ENCODE measurements at regions of chrX and their contacts with region 1.

Region 1: GRCh38 chrX:48957827-48958634 is 624 bp upstream of the OTUD5 start:
- DNase-seq: peak; percentile 87 to 98 (median 93)
- ATAC-seq: peak; percentile 80 to 81
- H3K4me3 Mint-ChIP-seq: peak overlapping the region; percentile 93 to 100 (median 99)
- H3K27ac Mint-ChIP-seq: peak overlapping the region; percentile 96 to 100 (median 100)
- H3K4me1 Mint-ChIP-seq: peaks cover 18 to 56% (median 42%) of the 10 kb centered on the region in 4 donors
- H3K27me3 Mint-ChIP-seq: no peaks in the 10 kb centered on the region

Region 2: GRCh38 chrX:48737213-48737938 is 220.7 kb before region 1 on chrX:
- POLR2A ChIA-PET with region 1: interaction called, 10 read pairs
- DNase-seq: peak; percentile 63 to 96 (median 85)
- ATAC-seq: peak; percentile 95
- H3K4me3 Mint-ChIP-seq: peak overlapping the region; percentile 81 to 95 (median 92)
- H3K27ac Mint-ChIP-seq: peak overlapping the region; percentile 95 to 99 (median 97)
- H3K4me1 Mint-ChIP-seq: peaks cover 11 to 23% (median 22%) of the 10 kb centered on the region in 4 donors
- H3K27me3 Mint-ChIP-seq: no peaks in the 10 kb centered on the region

Region 3: DNA sequence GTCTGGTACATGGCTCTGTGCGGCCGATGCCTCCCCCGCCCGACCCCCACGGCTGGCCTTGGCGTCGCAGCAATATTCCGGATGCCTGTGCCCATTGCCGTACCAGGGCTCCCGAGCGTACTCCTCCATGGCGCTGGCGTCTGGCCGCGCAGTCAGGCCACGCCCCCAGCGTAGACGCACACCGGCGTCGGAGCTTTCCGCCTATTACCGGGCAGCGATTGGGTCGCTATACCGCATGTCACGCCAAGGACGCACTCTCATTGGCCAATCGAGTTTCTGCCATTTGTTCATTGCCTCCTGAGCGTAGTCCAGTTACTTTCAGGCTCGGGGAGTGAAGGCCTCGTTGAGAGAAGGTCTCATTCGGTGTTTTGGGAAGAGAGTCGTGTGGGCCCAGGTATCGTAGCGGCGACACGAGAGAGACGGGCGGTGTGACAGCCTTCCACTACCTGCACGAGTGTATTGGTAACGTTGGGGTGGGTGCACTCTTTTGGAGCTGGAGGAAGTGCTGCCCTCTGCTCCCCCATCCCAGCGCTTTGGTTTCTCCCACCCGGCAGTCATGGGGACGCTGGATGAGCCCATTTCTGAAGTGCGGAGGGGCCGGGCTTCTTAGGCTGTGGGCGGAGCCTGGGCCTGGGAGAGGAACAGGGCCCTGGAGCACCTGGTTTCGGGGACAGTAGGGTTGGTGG is 60.3 kb before region 1 on chrX and contains the starts of genes PQBP1 and TIMM17B:
- POLR2A ChIA-PET with region 1: interaction called, 24 read pairs
- DNase-seq: peak; percentile 79 to 94 (median 87)
- ATAC-seq: peak; percentile 86
- H3K4me3 Mint-ChIP-seq: peak within 1 kb of the TSS; percentile 88 to 98 (median 92)
- H3K27ac Mint-ChIP-seq: peak within 1 kb of the TSS; percentile 92 to 100 (median 96)
- H3K4me1 Mint-ChIP-seq: peaks cover 4 to 41% (median 26%) of the 10 kb centered on the region in 4 donors
- H3K27me3 Mint-ChIP-seq: no peaks in the 10 kb centered on the region
- polyA plus RNA-seq, gene PQBP1: 92.7 to 114 (median 94.5) TPM
- polyA plus RNA-seq, gene TIMM17B: 52.9 to 59.1 (median 55.5) TPM

Region 4: DNA sequence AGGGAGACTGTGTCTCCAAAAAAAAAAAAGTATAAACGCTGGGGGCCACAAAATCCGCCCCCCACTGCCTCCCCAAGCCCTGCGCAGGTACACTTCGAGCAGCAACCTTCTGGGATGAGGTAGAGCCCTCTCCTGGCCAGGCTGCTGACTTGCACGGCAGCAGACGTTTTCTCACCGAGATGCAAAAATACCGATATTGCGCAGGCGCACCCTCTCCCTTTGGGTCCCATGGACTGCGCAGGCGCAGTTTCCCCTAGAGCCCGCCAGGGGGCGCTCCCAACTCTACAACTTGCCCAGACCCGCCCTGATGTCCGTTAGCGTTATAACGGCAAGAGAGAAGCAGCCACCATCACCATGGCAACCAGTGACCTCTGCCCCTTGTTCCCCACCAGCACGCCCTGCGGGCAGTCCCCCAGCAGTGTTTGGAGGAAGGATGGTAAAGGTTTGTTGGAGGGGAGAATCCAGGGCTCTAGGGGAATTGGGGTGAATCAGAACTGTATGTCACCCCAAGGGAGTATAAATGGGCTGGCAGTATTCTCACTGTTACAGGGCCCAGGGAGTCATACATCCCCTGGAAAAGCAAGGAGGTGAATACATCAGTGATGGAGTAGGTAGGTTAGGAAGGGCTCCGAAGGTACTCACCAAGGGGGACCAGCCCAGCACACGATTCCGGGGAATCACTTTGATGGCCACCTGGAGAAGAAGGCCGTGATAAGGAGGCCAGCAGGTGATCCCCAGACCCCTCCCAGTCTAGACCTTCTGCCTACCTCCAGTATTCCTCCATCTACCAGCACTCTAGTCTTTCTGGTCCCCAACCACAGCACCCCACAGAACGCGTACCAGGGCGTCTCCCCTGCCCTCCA is 40.7 kb before region 1 on chrX:
- POLR2A ChIA-PET with region 1: interaction called, 37 read pairs
- DNase-seq: peak; percentile 70 to 95 (median 89)
- ATAC-seq: peak; percentile 30 to 34
- H3K4me3 Mint-ChIP-seq: peak overlapping the region; percentile 95 to 99 (median 98)
- H3K27ac Mint-ChIP-seq: peak overlapping the region; percentile 87 to 99 (median 97)
- H3K4me1 Mint-ChIP-seq: peaks cover 14 to 69% (median 49%) of the 10 kb centered on the region in 4 donors
- H3K27me3 Mint-ChIP-seq: peaks cover 0 to 2% (median 0%) of the 10 kb centered on the region in 5 donors

Region 5: GRCh38 chrX:48972220-48973167 is 14.5 kb after region 1 on chrX:
- POLR2A ChIA-PET with region 1: interaction called, 26 read pairs
- DNase-seq: peak in 4 of 10 donors; percentile 16 to 28 (median 19)
- ATAC-seq: peak; percentile 66 to 71
- H3K4me3 Mint-ChIP-seq: peak overlapping the region; percentile 22 to 65 (median 58)
- H3K27ac Mint-ChIP-seq: peak overlapping the region in 3 of 10 donors; percentile 6 to 76 (median 49)
- H3K4me1 Mint-ChIP-seq: peaks cover 8 to 34% (median 12%) of the 10 kb centered on the region in 4 donors
- H3K27me3 Mint-ChIP-seq: peaks cover 0 to 1% (median 0%) of the 10 kb centered on the region in 5 donors

Region 6: GRCh38 chrX:49043220-49043986 is 85.4 kb after region 1 on chrX and contains the start of gene TFE3:
- POLR2A ChIA-PET with region 1: interaction called, 15 read pairs
- DNase-seq: peak; percentile 83 to 98 (median 94)
- ATAC-seq: peak; percentile 88 to 89
- H3K4me3 Mint-ChIP-seq: peak within 1 kb of the TSS; percentile 81 to 94 (median 88)
- H3K27ac Mint-ChIP-seq: peak within 1 kb of the TSS; percentile 83 to 96 (median 94)
- H3K4me1 Mint-ChIP-seq: peaks cover 13 to 40% (median 35%) of the 10 kb centered on the region in 4 donors
- H3K27me3 Mint-ChIP-seq: no peaks in the 10 kb centered on the region
- polyA plus RNA-seq, gene TFE3: 2.6 to 4.4 (median 3.5) TPM

Measured in naive thymus-derived CD8-positive, alpha-beta T cell (primary cell).